ENCODE measurements at regions of chr4 and their contacts with region 1.

Region 1: DNA sequence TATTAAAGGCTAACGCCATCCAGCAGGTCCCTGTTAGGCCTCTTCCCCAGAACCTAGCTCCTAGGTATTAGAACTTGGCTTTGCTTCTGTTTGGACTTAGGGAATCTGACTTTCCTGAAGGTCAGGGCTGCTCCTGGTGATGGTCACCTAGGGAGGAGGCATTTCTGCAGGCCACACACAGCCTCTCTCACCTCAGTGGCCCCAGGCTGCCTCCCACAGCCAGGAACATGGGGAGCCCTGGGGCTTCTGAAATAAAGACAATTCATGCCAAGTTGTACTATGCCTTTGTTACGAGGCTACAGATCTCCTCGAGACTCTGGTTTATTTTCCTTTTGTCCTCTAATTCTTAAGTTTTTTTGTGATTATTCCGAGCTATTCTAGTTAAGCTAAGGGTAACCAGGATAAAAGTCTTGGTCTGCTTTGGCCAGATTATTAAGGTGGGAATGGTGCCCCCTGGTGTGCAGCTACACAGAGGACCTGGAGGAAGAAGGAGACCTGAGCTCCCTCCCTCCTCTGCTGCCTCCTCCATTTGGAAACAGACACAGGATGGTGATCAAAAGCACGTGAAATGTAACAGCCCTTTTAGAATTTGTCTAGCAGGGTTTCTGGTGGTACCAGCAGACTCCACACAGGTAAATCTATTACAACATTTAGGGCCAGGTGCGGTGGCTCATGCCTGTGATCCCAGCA is 131.0 kb downstream of the DCLK2 start:
- DNase-seq: peak; percentile 52
- CTCF ChIP-seq: peak; percentile 62

Region 2: GRCh38 chr4:150010525-150011126 is 198.7 kb before region 1 on chr4:
- CTCF ChIA-PET with region 1: interaction called, 73 read pairs
- POLR2A ChIA-PET with region 1: no interaction called
- DNase-seq: peak; percentile 15
- CTCF ChIP-seq: peak; percentile 36

Region 3: GRCh38 chr4:150199056-150199455 is 10.2 kb before region 1 on chr4:
- CTCF ChIA-PET with region 1: interaction called, 10 read pairs
- POLR2A ChIA-PET with region 1: no interaction called
- DNase-seq: no peak
- CTCF ChIP-seq: no peak

Region 4: GRCh38 chr4:150457802-150458201 is 248.5 kb after region 1 on chr4:
- CTCF ChIA-PET with region 1: no interaction called
- POLR2A ChIA-PET with region 1: no interaction called
- DNase-seq: no peak
- CTCF ChIP-seq: no peak

Measured in GM10248 (cell line).